ENCODE measurements at regions of chr6 and their contacts with region 1.

Region 1: DNA sequence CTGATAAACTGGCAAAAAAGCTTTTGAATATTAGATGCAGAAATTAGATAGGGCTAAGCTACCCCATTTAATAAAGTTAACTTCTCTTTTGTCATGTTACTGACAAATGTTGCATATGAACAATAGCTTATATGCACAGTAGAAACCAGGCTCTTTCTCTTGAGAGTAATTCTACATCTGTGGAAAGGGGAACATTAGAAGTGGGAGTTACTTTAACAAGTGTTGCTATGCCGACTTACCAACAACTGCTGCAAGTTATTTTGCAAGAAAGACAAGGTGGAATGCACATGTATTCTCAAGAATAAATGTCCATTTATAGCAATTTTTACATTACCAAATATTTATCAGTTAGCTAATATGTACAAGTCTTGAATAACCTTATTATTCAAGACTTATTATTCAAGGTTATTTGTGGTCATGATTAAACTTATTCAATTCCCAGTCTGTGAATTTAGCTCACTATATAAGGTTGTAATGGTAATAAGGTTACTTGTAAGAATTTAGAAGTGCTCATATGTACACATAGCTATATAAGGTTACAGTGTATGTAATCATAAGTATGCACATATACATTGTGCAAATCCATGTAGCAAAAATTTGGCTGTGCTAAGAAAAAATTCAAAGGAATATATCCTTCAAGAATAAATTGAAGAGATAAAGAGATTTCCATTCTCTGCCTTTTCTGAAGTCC is 38.3 kb downstream of the ADGRG6 start:
- DNase-seq: no peak
- ATAC-seq: no peak
- H3K4me3 ChIP-seq: no peak overlapping the region
- H3K27ac ChIP-seq: no peak overlapping the region
- H3K4me1 ChIP-seq: peaks cover 23% of the 10 kb centered on the region
- H3K27me3 ChIP-seq: no peaks in the 10 kb centered on the region
- CTCF ChIP-seq: no peak

Region 2: DNA sequence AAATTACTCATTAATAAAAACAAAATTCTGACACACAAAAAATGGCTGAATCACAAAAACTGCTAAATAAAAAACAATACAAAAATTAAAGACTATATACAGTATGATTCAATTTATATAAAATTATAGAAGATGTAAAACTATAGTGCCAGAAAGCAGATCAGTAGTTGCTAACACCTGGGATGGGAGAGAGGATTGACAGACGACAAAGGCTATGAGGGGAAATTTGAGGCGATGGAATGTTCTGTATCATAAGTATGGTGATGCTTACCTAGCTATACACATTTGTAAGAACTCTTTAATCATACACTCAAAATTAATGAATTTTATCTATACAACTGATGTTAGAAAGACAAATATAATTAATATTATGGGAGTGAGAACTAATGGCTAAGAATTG is 455.3 kb before region 1 on chr6:
- CTCF ChIA-PET with region 1: no interaction called
- POLR2A ChIA-PET with region 1: no interaction called
- intact Hi-C with region 1: no loop called
- DNase-seq: no peak
- ATAC-seq: no peak
- H3K4me3 ChIP-seq: no peak overlapping the region
- H3K27ac ChIP-seq: no peak overlapping the region
- H3K4me1 ChIP-seq: no peaks in the 10 kb centered on the region
- H3K27me3 ChIP-seq: no peaks in the 10 kb centered on the region
- CTCF ChIP-seq: no peak

Region 3: DNA sequence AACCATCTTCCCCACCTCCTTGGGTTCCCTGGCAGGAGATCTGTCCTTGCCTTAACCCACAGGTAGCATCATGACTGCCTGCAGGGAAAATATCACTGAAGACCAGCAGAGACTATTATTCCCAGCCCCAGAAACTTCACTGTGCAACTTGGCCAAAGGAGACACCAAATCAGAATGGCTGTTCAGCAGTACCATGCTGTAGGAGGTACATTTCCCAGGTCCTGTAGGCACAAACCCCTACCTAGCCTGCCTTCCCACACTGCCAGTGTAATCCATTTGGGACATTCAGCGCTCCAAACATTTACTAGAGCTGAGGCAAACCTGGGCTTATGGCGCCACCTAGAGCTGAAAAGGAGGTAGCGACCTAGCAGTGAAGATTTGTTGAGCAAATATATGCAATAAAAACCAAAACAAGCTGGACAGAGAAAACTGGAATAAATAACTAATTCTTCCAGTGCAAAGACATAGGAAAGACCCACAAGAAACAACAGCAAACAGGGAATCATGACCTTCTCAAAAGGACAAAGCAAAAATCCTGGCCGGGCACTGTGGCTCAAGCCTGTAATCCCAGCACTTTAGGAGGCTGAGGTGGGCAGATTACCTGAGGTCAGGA is 132.7 kb before region 1 on chr6:
- CTCF ChIA-PET with region 1: no interaction called
- POLR2A ChIA-PET with region 1: no interaction called
- intact Hi-C with region 1: no loop called
- DNase-seq: peak; percentile 69
- ATAC-seq: peak; percentile 79
- H3K4me3 ChIP-seq: no peak overlapping the region
- H3K27ac ChIP-seq: no peak overlapping the region
- H3K4me1 ChIP-seq: no peaks in the 10 kb centered on the region
- H3K27me3 ChIP-seq: no peaks in the 10 kb centered on the region
- CTCF ChIP-seq: peak; percentile 80

Region 4: DNA sequence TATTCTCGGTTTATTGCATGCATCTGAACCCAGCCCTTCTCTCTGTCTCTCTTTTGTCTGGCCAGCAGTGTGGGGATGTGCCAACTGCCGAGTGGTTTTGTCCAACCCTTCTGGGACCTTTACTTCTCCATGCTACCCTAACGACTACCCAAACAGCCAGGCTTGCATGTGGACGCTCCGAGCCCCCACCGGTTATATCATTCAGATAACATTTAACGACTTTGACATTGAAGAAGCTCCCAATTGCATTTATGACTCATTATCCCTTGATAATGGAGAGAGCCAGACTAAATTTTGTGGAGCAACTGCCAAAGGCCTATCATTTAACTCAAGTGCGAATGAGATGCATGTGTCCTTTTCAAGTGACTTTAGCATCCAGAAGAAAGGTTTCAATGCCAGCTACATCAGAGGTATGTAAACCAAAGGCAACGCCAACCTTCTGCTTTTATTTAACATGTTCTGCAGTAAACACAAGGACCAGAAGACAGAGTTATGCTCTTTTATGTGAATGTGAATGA is 27.4 kb after region 1 on chr6:
- CTCF ChIA-PET with region 1: no interaction called
- POLR2A ChIA-PET with region 1: no interaction called
- intact Hi-C with region 1: loop called (anchors 1 kb)
- DNase-seq: no peak
- ATAC-seq: no peak
- H3K4me3 ChIP-seq: no peak overlapping the region
- H3K27ac ChIP-seq: 0 out of 2 replicates have a peak overlapping the region, but pooled peaks have one; percentile 8
- H3K4me1 ChIP-seq: peaks cover 15% of the 10 kb centered on the region
- H3K27me3 ChIP-seq: no peaks in the 10 kb centered on the region
- CTCF ChIP-seq: no peak

Region 5: GRCh38 chr6:142416179-142416578 is 76.1 kb after region 1 on chr6:
- CTCF ChIA-PET with region 1: no interaction called
- POLR2A ChIA-PET with region 1: no interaction called
- intact Hi-C with region 1: no loop called
- DNase-seq: peak; percentile 41
- ATAC-seq: peak; percentile 48
- H3K4me3 ChIP-seq: no peak overlapping the region
- H3K27ac ChIP-seq: peak overlapping the region; percentile 30; the same call in 1 of the 2 replicates
- H3K4me1 ChIP-seq: peaks cover 44% of the 10 kb centered on the region
- H3K27me3 ChIP-seq: no peaks in the 10 kb centered on the region
- CTCF ChIP-seq: no peak

Measured in PC-3 (cell line).